ENCODE measurements at regions of chr2 and their contacts with region 1.

Region 1: GRCh38 chr2:160516547-160517365 is 23.1 kb upstream of the RBMS1 start:
- DNase-seq: peak; percentile 34
- H3K4me3 Mint-ChIP-seq: peak overlapping the region; percentile 34
- H3K27ac Mint-ChIP-seq: peak overlapping the region; percentile 51
- H3K4me1 Mint-ChIP-seq: peaks cover 36% of the 10 kb centered on the region
- H3K27me3 Mint-ChIP-seq: no peaks in the 10 kb centered on the region

Region 2: GRCh38 chr2:160505256-160505655 is 11.5 kb before region 1 on chr2:
- CTCF ChIA-PET with region 1: no interaction called
- intact Hi-C with region 1: loop called (anchors 1 kb)
- DNase-seq: no peak
- H3K4me3 Mint-ChIP-seq: no peak overlapping the region
- H3K27ac Mint-ChIP-seq: no peak overlapping the region
- H3K4me1 Mint-ChIP-seq: peaks cover 17% of the 10 kb centered on the region
- H3K27me3 Mint-ChIP-seq: no peaks in the 10 kb centered on the region